ENCODE measurements at regions of chr17 and their contacts with region 1.

Region 1: GRCh38 chr17:14761052-14761385 is 460.1 kb downstream of the HS3ST3B1 start:
- DNase-seq: no peak
- ATAC-seq: no peak
- H3K4me3 ChIP-seq: no peak overlapping the region
- H3K27ac ChIP-seq: no peak overlapping the region
- H3K4me1 ChIP-seq: no peaks in the 10 kb centered on the region
- H3K27me3 ChIP-seq: peaks cover 0 to 7% (median 0%) of the 10 kb centered on the region in 9 donors
- CTCF ChIP-seq: no peak
- POLR2A ChIP-seq: no peak

Region 2: DNA sequence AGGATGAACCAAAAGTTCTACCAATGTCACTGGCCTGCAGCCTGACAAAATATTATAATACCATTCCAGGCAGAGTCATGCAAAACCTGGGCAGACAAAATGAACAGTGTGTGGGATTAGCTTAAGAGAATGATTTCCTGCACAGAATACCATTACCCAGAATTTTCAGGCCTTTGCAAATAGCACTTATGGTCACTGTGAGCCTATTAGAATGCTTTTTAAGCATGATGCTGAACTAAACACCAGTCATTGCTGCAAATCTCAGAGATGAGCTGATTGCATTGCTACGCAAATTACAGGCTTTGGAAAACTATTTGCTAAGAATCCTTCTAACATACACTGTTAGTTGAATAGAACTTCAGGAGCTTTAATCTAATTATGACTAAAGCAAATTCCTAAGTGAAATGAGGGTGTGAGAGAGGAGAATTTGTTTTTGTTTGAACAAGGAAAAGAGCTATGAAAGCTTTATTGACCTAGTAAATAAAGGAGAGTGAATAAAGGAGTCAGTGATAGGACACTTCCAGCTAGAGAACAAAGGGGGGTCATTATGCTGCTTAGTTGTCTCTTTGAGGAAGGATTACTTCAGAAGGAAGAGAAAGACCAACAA is 61.3 kb before region 1 on chr17:
- intact Hi-C with region 1: loop called in 1 of 10 experiments (anchors 10 kb)
- DNase-seq: no peak
- ATAC-seq: no peak
- H3K4me3 ChIP-seq: no peak overlapping the region
- H3K27ac ChIP-seq: no peak overlapping the region
- H3K4me1 ChIP-seq: no peaks in the 10 kb centered on the region
- H3K27me3 ChIP-seq: peaks cover 0 to 4% (median 0%) of the 10 kb centered on the region in 9 donors
- CTCF ChIP-seq: no peak
- POLR2A ChIP-seq: no peak

Region 3: DNA sequence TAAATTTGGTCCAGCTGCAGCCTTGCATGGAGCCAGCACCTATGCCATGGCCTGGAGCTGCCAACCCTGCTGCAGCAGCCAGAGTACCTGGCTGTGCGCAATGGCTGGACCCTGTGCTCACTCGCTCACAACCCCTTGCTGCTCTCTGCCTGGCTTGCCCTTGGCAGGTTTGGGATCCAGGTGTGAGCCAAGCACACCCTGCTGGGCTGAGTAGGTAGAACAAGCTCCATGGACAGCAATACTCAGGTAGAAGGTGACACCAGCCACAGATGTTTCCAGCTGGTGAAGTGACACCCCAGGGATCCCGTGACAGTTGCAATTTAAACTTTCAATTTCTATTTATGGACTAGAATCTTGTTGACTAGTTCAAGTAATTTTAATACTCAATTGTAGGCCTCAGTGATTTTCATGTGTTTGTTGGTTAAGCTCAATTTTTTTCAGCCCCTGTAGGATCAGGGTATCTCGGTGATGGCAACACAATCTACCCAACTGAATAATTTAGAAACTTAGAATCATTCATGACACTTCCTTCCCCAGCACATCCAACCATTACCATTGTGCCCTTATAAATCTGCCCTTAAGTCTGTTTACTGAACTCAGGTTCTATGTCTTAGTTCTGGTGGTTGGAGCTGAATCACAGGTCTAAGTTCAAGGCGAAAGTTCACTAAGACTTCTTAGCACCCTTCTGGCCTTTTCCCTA is 24.1 kb after region 1 on chr17:
- intact Hi-C with region 1: no loop called
- DNase-seq: no peak
- ATAC-seq: no peak
- H3K4me3 ChIP-seq: no peak overlapping the region
- H3K27ac ChIP-seq: no peak overlapping the region
- H3K4me1 ChIP-seq: no peaks in the 10 kb centered on the region
- H3K27me3 ChIP-seq: peaks cover 0 to 8% (median 0%) of the 10 kb centered on the region in 9 donors
- CTCF ChIP-seq: no peak
- POLR2A ChIP-seq: no peak